ENCODE measurements at regions of chr5 and their contacts with region 1.

Region 1: DNA sequence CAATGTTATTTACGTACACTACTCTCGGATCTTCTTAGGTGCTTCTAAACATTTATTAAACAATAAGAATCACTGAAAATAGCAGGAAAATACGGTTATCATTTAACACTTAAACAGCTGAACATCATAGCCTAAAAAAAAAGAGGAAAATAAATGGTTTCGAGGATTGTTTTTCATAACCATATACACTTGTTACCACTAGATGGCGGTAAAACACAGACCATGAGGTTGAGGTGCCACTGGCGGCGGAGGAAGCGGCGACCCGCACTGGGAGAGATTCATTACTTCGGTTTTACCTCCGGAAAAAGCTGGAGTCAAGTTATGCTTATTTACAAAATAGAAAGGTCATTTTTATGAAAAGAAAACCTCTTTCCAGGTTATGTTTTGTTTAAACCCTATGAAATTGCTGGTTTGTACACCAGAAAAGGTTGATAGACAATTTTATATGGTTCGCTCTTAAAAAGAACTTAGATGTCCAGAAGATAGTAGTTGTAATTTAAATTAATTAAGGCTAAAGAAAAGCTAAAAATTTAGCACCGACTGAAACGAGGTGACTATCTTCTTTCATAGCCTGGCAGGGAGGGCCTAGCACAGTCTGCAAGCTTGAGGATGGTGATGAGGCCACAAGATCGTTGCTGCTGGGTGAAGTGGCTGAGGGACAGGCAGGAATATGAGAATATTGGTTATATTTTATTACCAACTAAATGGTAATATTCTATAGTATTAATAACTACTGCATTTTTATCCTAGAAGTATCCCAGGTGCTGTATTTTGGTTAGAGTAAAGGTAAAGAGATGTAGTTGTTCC is 605.7 kb downstream of the RAB3C start:
- DNase-seq: no peak
- ATAC-seq: peak; percentile 83
- H3K4me3 ChIP-seq: no peak overlapping the region
- H3K27ac ChIP-seq: no peak overlapping the region
- H3K4me1 ChIP-seq: no peaks in the 10 kb centered on the region
- H3K27me3 ChIP-seq: no peaks in the 10 kb centered on the region; a peak in 2 of 4 replicates
- CTCF ChIP-seq: peak; percentile 58 to 68 (median 68); a peak in 5 of 6 replicates
- EP300 ChIP-seq: no peak
- POLR2A ChIP-seq: no peak
- RAD21 ChIP-seq: peak; percentile 87

Region 2: DNA sequence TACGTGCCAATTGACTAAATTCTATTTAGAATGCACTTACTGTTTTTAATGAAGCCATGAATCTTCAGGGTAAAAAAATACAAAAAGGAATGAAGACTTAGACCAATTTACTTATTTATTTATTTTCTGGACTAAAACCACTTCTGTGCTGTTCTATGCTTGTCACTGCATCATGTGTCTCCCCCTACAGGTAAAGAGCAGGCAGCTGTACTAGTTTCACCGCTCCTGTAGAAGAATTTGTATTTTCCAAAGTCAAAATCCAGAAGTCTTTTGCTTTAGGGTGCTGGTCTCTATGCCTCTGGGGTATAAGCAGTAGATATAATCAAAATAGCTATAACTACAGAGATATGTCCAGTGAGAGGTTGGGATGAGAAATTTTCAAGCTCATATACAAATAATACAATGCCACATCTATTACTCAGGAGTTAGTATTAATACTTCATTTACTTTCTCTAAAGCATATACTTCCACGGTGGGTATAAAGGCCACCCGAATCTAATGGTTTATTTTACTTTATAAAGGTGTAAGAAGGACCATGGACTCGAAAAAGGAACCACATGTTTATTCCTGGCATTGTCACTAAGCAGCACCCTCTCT is 14.3 kb before region 1 on chr5:
- CTCF ChIA-PET with region 1: interaction called, 31 read pairs
- POLR2A ChIA-PET with region 1: no interaction called
- RAD21 ChIA-PET with region 1: interaction called, 4 read pairs
- SMC1A ChIA-PET with region 1: interaction called, 15 read pairs
- in situ Hi-C with region 1: no loop called
- intact Hi-C with region 1: no loop called
- DNase-seq: no peak
- ATAC-seq: peak; percentile 83
- H3K4me3 ChIP-seq: no peak overlapping the region
- H3K27ac ChIP-seq: no peak overlapping the region
- H3K4me1 ChIP-seq: peaks cover 16% of the 10 kb centered on the region
- H3K27me3 ChIP-seq: no peaks in the 10 kb centered on the region
- CTCF ChIP-seq: peak; percentile 57 to 73 (median 70)
- EP300 ChIP-seq: no peak
- POLR2A ChIP-seq: no peak
- RAD21 ChIP-seq: peak; percentile 84

Region 3: GRCh38 chr5:59367791-59368394 is 179.3 kb after region 1 on chr5:
- CTCF ChIA-PET with region 1: interaction called, 98 read pairs
- POLR2A ChIA-PET with region 1: no interaction called
- RAD21 ChIA-PET with region 1: interaction called, 10 read pairs
- SMC1A ChIA-PET with region 1: interaction called, 13 read pairs
- in situ Hi-C with region 1: no loop called
- intact Hi-C with region 1: loop called (anchors 5 kb)
- DNase-seq: no peak
- ATAC-seq: peak; percentile 74
- H3K4me3 ChIP-seq: no peak overlapping the region
- H3K27ac ChIP-seq: no peak overlapping the region
- H3K4me1 ChIP-seq: no peaks in the 10 kb centered on the region
- H3K27me3 ChIP-seq: no peaks in the 10 kb centered on the region; a peak in 1 of 4 replicates
- CTCF ChIP-seq: peak; percentile 63 to 67 (median 66)
- EP300 ChIP-seq: no peak
- POLR2A ChIP-seq: no peak
- RAD21 ChIP-seq: peak; percentile 67

Region 4: DNA sequence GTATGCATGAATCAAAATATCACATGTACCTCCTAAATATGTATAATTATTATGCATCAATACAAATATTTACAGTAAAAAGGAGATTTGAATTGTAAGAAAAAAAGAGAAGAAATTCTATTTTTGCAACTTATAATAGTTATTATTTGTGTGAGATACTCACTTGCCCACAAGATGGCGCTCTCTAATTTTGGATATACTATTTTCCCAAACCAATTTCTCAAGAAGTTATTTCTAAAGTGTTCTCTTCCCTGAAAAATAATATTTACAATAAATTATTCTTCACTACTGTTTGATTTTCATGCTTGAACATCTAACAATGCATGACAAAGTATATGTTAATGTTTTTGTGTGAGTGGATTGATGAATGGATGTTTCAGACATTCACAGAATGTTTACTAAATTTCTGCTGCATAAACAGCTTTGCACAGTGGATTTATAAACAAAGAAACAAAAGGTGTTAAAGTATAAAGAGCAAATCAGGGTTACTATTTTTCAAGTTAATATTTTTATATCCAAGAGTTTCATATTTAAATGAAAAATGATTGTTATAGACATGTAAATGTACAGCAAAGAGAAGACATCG is 201.5 kb after region 1 on chr5:
- CTCF ChIA-PET with region 1: interaction called, 16 read pairs
- POLR2A ChIA-PET with region 1: no interaction called
- RAD21 ChIA-PET with region 1: no interaction called
- SMC1A ChIA-PET with region 1: interaction called, 4 read pairs
- in situ Hi-C with region 1: no loop called
- intact Hi-C with region 1: no loop called
- DNase-seq: no peak
- ATAC-seq: no peak
- H3K4me3 ChIP-seq: no peak overlapping the region
- H3K27ac ChIP-seq: no peak overlapping the region
- H3K4me1 ChIP-seq: no peaks in the 10 kb centered on the region
- H3K27me3 ChIP-seq: no peaks in the 10 kb centered on the region
- CTCF ChIP-seq: peak; percentile 27 to 58 (median 44); a peak in 5 of 6 replicates
- EP300 ChIP-seq: no peak
- POLR2A ChIP-seq: no peak
- RAD21 ChIP-seq: peak; percentile 52

Region 5: GRCh38 chr5:59673438-59674058 is 484.9 kb after region 1 on chr5:
- CTCF ChIA-PET with region 1: interaction called, 7 read pairs
- POLR2A ChIA-PET with region 1: no interaction called
- RAD21 ChIA-PET with region 1: no interaction called
- SMC1A ChIA-PET with region 1: no interaction called
- in situ Hi-C with region 1: loop called (anchors 25 kb)
- intact Hi-C with region 1: loop called (anchors 5 kb)
- DNase-seq: no peak
- ATAC-seq: peak; percentile 60
- H3K4me3 ChIP-seq: no peak overlapping the region
- H3K27ac ChIP-seq: no peak overlapping the region
- H3K4me1 ChIP-seq: no peaks in the 10 kb centered on the region
- H3K27me3 ChIP-seq: no peaks in the 10 kb centered on the region
- CTCF ChIP-seq: peak; percentile 54 to 76 (median 65); a peak in 5 of 6 replicates
- EP300 ChIP-seq: no peak
- POLR2A ChIP-seq: no peak
- RAD21 ChIP-seq: peak; percentile 90

Region 6: DNA sequence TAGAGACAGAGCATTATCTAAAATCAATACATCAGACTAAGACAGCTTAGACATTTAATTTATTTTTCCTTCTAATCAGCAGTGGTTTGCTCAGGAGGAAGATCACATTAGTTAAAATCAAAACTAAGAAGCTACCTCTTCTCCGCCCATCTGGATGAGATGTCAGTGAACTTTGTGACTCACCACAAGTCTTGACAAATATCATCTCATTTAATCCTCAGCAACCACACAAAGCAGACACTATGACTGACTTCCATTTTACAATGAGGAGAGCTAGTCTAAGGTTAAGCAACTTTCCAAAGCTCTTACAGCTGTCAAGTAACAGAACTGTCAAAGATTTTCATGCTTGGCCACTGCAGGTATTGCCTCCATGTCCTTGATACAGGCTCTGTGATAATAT is 1221.8 kb after region 1 on chr5:
- CTCF ChIA-PET with region 1: no interaction called
- POLR2A ChIA-PET with region 1: no interaction called
- RAD21 ChIA-PET with region 1: no interaction called
- SMC1A ChIA-PET with region 1: no interaction called
- in situ Hi-C with region 1: no loop called
- intact Hi-C with region 1: no loop called
- DNase-seq: no peak
- ATAC-seq: no peak
- H3K4me3 ChIP-seq: no peak overlapping the region
- H3K27ac ChIP-seq: no peak overlapping the region
- H3K4me1 ChIP-seq: no peaks in the 10 kb centered on the region
- H3K27me3 ChIP-seq: no peaks in the 10 kb centered on the region
- CTCF ChIP-seq: no peak
- EP300 ChIP-seq: no peak
- POLR2A ChIP-seq: no peak
- RAD21 ChIP-seq: no peak

Measured in GM12878 (cell line).